GM23248 (cell line): ENCODE measurements at regions of chrX and their contacts with region 1.

Region 1: DNA sequence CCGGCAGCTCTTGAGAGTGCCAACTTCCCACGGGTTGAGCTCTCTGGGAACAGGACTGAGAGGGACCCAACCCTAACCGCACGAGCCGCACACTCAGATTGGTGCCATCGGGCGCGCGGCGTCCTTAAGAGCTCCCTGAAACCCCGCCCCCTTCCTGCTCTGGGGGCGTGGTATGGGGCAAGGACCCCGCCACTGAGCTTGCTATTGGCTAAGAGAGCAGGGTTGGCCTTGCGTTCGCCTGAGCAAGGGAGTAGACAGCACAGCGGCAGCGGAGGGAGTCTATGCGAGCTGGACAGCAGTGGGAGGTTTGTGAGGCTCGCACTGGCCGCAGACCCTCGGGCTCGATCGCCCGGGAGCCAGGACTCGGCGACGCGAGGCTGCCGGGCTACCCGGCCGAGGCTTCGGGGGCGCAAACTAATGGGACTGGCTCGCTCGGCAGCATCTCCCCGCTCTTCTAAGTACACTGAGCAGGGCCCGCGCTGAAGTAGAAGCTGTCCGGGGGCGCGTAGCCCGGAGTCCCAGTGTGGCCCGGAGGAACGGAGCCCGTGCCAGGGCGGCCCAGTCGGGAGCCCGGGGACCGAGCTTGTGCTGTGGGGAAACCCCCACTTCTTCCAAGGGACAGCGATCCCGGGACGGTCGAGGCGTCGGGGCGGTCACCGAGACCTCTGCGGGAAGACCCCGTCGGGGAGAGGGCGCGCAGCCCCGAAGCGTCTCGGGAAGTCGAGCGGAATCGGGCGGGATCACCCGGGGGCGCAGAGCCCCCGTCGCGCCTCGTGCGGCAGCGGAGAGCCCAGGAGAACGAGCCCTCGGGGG is at the start of gene EFNB1:
- DNase-seq: peak; percentile 95
- H3K4me3 ChIP-seq: peak within 1 kb of the TSS; percentile 84
- H3K27ac ChIP-seq: peak within 1 kb of the TSS; percentile 66
- H3K4me1 ChIP-seq: 0 out of 2 replicates have a peak, but pooled peaks cover 3% of the 10 kb centered on the region
- H3K27me3 ChIP-seq: no peaks in the 10 kb centered on the region
- total RNA-seq, gene EFNB1: 12.6 and 15.8 TPM in 2 replicates

Region 2: GRCh38 chrX:69216911-69217310 is 388.0 kb after region 1 on chrX:
- in situ Hi-C with region 1: loop called (anchors 5 kb)
- DNase-seq: no peak
- H3K4me3 ChIP-seq: no peak overlapping the region
- H3K27ac ChIP-seq: no peak overlapping the region
- H3K4me1 ChIP-seq: no peaks in the 10 kb centered on the region
- H3K27me3 ChIP-seq: no peaks in the 10 kb centered on the region

Region 3: DNA sequence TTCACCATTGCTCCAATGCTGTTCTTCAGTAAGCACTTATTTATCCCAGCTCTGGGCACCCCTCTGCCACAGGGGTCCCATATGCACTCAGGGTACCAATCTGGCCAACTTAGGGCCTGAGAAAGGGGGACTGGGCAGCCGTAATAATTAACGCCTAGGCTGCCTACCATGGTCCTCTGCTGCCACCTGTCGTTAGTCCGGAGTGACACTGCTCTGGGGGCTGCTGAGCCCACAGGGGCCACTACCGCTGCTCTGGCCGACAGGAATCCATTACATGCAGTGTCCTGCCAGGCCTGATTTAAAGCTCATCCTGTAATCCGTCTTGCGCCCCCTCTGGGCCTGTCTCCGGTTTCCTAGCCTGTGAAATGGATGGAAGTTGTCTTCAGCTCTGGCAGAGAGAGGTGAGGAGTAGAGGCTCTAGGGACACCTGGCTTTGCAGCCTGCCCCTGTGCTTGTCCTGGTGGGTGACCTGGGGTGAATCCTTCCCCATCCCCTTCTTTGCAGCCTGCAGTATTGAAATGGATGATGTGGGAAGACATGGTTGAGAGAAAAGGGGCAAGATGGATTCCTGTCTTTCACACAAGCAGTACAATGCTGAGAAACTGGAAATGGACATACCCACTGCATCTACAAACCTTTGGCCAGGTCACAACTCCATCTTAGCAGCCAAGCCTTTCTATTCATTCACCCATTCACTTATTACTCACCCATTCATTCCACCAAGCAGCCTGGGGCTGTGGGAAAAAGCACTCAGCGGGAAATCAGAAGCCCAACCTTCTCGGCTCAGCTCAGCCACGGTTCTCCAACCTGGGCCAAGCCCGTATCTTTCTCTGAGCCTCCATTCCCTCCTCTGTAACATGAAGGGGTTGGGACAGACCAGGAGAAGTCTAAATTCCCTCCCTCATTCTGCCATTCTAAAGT is 558.9 kb after region 1 on chrX:
- in situ Hi-C with region 1: loop called (anchors 10 kb)
- DNase-seq: peak; percentile 54
- H3K4me3 ChIP-seq: no peak overlapping the region
- H3K27ac ChIP-seq: no peak overlapping the region
- H3K4me1 ChIP-seq: no peaks in the 10 kb centered on the region
- H3K27me3 ChIP-seq: no peaks in the 10 kb centered on the region